ENCODE measurements at regions of chr4 and their contacts with region 1.

Region 1: DNA sequence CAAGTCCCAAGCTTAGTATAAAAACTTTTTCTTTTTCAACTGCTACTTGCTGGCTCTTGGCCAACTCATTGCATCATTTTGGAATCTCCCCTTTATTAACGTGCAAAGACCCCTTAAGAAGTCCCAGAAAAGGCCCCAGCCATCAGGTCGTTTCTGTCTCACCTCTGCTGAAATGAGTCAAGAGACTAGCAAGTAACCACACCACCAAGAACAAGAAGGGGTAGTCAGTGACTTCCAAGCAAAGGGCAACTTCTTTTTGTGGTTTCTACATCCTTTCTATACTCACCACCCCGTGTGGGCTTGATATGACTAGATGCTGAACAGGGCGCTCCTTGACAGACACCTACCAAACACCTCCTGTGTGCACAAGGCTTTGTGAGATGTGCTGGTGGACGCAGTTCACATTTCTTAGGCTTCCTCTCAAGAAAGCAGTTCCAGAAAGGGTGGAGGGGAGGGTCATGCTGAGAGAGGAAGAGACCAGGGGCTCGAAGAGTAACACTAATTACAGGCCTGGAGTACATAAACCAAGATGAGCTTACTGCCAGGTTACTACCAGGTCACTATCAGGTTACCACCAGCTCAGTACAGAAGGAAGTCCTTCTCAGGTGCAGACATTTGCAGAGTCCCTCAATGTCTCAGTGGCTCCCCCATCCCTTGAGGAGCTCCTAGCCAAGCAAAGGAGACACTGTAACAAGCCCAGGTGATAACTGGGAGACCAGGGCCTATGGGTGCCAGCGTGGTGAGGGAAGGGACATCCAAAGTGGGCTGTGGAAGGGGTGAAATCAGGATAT is 19.3 kb downstream of the JAKMIP1 start:
- DNase-seq: no peak
- ATAC-seq: no peak

Region 2: DNA sequence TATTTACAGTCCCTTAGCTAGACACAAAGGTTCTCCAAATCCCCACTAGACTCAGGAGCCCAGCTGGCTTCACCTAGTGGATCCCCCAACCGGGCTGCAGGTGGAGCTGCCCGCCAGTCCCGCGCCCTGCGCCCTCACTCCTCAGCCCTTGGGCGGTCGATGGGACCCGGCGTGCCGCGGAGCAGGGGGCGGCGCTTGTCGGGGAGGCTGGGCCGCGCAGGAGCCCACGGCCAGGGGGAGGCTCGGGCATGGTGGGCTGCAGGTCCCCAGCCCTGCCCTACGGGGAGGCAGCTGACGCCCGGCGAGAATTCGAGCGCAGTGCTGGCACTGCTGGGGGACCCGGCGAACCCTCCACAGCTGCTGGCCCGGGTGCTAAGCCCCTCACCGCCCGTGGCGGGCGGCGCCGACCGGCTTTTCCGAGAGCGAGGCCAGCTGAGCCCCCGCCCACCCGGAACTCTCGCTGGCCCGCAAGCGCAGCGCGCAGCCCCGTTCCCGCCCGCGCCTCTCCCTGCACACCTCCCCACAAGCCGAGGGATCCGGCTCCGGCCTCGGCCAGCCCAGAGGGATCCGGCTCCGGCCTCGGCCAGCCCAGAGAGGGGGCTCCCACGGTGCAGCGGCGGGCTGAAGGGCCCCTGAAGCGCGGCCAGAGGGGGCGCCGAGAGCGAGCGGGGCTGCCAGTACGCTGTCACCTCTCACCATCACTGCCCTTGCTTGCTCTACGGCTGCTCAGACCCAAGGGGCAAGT is 128.0 kb after region 1 on chr4:
- intact Hi-C with region 1: no loop called
- DNase-seq: no peak
- ATAC-seq: no peak

Region 3: DNA sequence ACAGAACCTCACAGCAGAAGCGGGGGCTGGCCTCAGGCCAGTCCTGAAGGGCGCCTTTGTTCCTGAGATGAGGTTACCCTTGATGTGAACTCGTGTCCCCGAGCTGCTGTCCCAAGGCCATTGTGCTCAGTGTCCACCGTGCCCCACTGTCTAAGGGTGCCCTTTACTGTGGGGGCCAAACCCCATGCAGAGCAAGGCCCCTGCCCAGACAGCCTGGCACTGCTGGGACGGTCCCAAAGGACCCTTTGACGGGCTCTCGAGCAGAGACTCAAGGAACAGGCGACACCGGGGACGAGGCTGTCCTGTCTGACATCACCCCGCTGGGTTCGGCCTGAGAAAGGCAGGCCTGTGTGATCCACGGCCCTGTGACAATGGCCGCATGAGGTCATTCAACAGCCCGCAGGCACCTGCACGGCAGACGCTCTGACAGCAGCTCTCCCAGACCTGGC is 1877.0 kb after region 1 on chr4:
- intact Hi-C with region 1: loop called (anchors 5 kb)
- DNase-seq: no peak
- ATAC-seq: no peak